ENCODE measurements at regions of chr5 and their contacts with region 1.

Region 1: DNA sequence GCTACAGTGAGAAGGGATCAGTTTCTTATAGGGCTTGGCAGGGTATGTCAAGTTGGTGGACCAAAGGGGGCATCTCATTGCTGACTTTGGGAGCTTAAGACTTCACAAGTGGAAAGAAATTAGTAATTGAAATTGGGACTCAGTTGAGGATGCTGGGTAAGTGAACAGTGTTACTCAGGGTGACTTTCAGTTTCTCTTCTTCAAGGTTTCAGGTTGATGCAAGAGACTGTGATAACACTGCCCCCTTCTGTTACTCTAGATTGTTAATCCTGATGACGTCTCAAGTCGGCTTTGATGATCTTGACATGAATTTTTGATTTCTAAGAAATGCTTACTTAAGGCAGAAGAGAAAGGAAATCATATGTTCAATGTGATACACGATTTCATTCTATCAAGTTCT is 21.3 kb downstream of the KCTD16 start:
- DNase-seq: peak; percentile 50
- H3K4me3 Mint-ChIP-seq: no peak overlapping the region
- H3K27ac Mint-ChIP-seq: no peak overlapping the region
- H3K4me1 Mint-ChIP-seq: peaks cover 30% of the 10 kb centered on the region
- H3K27me3 Mint-ChIP-seq: no peaks in the 10 kb centered on the region

Region 2: GRCh38 chr5:142821733-142822487 is 1370.1 kb before region 1 on chr5:
- CTCF ChIA-PET with region 1: no interaction called
- intact Hi-C with region 1: loop called (anchors 5 kb)
- DNase-seq: peak; percentile 49
- H3K4me3 Mint-ChIP-seq: no peak overlapping the region
- H3K27ac Mint-ChIP-seq: peak overlapping the region; percentile 54
- H3K4me1 Mint-ChIP-seq: peaks cover 78% of the 10 kb centered on the region
- H3K27me3 Mint-ChIP-seq: no peaks in the 10 kb centered on the region

Region 3: DNA sequence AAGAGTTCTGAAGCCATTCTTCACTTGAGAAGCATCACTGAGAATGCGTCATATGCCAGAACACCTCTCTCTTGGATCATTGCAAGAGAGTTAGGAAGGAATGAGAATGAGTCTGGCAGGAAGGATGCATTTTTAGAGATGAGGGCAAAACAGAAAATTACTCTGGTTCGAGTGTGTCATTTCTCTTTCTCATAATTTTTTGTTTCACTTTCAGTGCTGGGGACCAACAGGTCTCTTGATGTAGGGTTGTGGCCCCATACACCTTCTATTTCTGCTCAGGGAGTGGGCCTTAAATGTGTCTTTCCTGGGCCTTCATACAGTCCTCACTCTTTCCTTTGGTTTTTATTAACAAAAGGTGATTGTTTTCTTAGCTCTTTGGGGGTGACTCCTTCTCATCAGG is 1090.9 kb before region 1 on chr5:
- CTCF ChIA-PET with region 1: no interaction called
- intact Hi-C with region 1: loop called (anchors 5 kb)
- DNase-seq: peak; percentile 22
- H3K4me3 Mint-ChIP-seq: peak overlapping the region; percentile 31
- H3K27ac Mint-ChIP-seq: peak overlapping the region; percentile 81
- H3K4me1 Mint-ChIP-seq: peaks cover 25% of the 10 kb centered on the region
- H3K27me3 Mint-ChIP-seq: no peaks in the 10 kb centered on the region

Region 4: DNA sequence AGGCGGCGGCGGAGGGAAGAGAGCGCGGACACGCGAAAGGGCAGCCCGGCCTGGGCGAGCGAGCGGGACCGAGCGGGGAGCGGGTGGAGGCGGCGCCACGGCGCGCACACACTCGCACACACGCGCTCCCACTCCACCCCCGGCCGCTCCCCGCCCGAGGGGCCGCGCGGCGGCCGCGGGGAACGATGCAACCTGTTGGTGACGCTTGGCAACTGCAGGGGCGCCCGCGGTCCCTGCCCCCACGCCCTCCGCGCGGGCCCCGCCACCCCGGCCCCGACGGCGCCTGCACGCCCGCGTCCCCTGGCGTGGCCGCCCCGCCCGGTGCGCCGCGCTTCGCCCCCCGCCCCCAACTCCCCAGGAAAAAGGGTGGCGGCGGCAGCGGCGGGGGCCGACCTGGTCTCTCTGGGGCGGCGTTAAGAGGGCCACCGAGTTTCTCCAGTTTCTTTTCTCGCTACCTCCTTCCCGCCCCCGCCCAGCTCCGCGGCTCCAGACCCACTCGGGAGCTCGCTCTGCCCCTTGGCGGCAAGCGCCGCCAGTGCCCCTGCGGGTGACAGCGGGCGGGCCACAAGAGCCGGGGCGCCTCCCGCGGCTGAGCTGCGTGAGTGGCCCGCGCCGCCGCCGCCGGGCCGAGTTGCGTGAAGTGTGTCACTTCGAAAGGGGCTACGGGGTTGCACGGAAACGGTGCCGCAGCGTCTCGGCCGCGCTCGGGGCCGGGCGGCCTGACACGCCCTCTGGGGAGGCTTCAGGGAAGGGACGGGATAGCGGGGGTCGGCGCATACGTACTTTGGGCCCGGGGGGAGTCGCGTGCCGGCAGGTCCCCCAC is 788.2 kb before region 1 on chr5 and contains the start of gene NR3C1:
- CTCF ChIA-PET with region 1: interaction called, 4 read pairs
- intact Hi-C with region 1: loop called (anchors 1 kb)
- DNase-seq: peak; percentile 84
- H3K4me3 Mint-ChIP-seq: peak within 1 kb of the TSS; percentile 82
- H3K27ac Mint-ChIP-seq: peak within 1 kb of the TSS; percentile 99
- H3K4me1 Mint-ChIP-seq: peaks cover 38% of the 10 kb centered on the region
- H3K27me3 Mint-ChIP-seq: no peaks in the 10 kb centered on the region
- total RNA-seq, gene NR3C1: 41.8 to 42.9 TPM

Region 5: DNA sequence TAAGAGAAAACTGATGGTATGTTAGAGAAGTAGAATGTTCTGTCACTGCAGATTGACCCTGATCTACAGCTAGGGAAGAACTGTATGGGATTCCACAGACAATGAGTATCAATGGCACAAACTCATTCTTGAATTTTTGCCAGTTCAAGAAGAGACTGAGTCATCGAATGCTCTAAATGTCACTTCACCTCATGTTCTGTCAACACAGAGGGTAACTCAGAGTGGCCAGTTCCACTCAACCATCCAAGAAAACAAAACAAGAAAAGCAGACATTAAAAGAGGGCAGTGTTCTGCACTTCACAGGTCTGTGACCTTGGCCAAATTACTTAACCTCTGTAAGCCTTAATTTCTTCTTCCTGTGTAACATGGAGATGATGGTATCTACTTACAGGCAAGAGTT is 512.2 kb before region 1 on chr5:
- CTCF ChIA-PET with region 1: no interaction called
- intact Hi-C with region 1: loop called (anchors 2 kb)
- DNase-seq: no peak
- H3K4me3 Mint-ChIP-seq: no peak overlapping the region
- H3K27ac Mint-ChIP-seq: no peak overlapping the region
- H3K4me1 Mint-ChIP-seq: peaks cover 22% of the 10 kb centered on the region
- H3K27me3 Mint-ChIP-seq: peaks cover 5% of the 10 kb centered on the region

Region 6: DNA sequence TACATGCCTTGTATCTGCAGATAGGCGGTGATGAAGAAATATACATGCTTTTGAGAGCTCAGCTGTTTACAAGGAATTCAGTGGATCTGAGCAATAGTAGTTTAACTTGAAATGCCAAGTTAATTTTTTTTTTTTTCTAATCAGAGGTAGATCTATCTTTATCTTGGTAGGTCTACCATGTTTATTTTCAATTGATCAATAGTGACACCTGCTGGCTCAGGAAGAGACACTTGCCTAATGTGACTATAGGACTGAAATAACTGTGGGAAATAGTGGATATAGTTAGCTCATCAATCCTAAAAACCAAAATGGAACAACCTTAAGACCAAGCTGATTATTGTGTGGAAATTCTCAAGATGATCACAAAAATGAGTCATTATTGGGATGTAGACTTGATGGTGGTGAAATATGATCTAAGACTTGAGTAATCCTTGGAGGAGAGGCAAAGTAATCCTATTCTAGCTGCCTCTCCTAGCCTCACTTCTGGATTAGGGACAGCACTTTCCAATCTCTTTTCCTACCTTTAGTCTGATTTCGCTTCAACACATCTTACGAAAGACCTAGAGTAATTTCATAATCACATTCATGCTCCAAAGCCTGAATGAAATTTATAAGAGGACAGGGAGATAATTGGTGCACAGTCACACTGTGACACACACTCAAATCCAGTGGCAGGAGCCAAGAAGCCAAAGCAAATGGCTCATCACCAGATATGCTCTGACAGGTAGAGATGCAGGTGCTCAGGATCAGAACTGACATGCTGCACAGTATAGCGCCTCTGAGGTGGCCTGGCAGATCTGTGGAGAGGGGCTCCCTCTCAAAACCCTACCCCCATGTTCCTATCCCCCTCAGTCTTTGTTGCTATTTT is 223.8 kb before region 1 on chr5:
- CTCF ChIA-PET with region 1: interaction called, 4 read pairs
- intact Hi-C with region 1: loop called (anchors 2 kb)
- DNase-seq: peak; percentile 6
- H3K4me3 Mint-ChIP-seq: no peak overlapping the region
- H3K27ac Mint-ChIP-seq: no peak overlapping the region
- H3K4me1 Mint-ChIP-seq: no peaks in the 10 kb centered on the region
- H3K27me3 Mint-ChIP-seq: peaks cover 16% of the 10 kb centered on the region

Region 7: GRCh38 chr5:144203750-144204596 is 12.0 kb after region 1 on chr5:
- CTCF ChIA-PET with region 1: interaction called, 12 read pairs
- intact Hi-C with region 1: no loop called
- DNase-seq: peak; percentile 65
- H3K4me3 Mint-ChIP-seq: no peak overlapping the region
- H3K27ac Mint-ChIP-seq: no peak overlapping the region
- H3K4me1 Mint-ChIP-seq: peaks cover 17% of the 10 kb centered on the region
- H3K27me3 Mint-ChIP-seq: peaks cover 38% of the 10 kb centered on the region

Region 8: GRCh38 chr5:144304688-144305087 is 112.7 kb after region 1 on chr5:
- CTCF ChIA-PET with region 1: no interaction called
- intact Hi-C with region 1: no loop called
- DNase-seq: no peak
- H3K4me3 Mint-ChIP-seq: no peak overlapping the region
- H3K27ac Mint-ChIP-seq: no peak overlapping the region
- H3K4me1 Mint-ChIP-seq: no peaks in the 10 kb centered on the region
- H3K27me3 Mint-ChIP-seq: peaks cover 12% of the 10 kb centered on the region